ENCODE measurements at regions of chr7 and their contacts with region 1.

Region 1: DNA sequence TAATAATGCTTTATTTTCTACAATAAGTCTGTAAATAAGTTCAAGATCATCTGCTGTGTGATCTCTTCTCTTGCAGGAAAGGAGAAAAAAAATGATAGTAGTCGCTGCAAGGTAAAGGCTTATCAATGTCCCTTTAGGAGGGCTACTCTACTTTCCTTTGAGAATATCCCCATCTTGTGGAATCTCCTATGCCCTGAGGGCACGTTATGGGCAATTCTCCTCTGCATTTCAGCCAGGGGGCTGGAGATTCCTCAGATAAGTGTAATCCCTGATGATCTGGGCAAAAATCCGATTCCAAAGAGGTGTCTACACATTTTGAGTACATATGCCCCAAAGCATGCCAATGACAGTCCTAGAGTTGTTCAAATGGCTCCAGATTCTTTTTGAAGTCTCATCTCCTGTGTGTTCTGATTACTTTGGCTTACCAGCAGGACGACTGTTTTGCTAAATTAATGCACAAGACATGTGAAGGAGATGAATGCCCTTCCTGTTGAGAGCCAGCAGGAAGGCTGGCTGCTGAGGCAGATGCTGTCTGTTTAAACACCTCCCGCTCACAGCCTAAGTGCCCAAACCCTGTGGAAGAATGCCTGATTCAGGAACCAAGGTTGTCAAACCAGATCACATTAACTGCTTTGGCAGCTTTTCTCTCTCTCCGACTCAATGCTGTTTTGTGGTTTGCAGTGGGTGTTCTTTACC is 171.2 kb upstream of the COL1A2 start:
- DNase-seq: peak; percentile 63
- ATAC-seq: peak; percentile 74
- H3K4me3 ChIP-seq: no peak overlapping the region
- H3K27ac ChIP-seq: no peak overlapping the region
- H3K4me1 ChIP-seq: no peaks in the 10 kb centered on the region
- H3K27me3 ChIP-seq: no peaks in the 10 kb centered on the region
- CTCF ChIP-seq: peak; percentile 52

Region 2: DNA sequence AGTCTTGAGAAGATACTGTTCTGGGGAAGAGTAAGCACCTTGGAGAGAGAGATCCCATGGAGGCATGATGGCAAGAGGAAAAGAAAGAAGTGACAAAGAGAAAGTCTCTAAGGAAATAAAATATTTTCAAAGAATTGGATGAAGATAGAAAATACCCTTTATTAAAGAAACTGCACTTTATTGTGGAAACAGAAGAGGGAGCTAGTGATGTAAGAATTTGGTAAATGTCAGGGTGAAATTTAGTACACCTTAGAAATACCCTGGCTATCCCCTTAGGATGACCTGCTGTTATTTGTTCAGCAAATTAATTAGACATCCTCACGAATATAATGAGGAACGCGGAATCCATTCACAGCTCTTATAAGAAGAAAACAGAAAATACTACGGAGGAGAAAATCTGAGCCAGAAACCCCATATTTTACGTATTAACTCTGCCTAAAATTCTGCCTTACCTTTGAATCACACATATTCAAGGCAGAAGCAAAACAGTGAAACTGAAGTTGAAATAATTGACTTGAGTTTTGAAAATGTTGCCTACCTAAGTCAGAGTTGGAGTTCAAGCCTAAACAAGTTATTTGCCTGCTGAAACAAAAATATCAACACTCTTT is 423.7 kb before region 1 on chr7:
- CTCF ChIA-PET with region 1: interaction called, 4 read pairs
- POLR2A ChIA-PET with region 1: no interaction called
- intact Hi-C with region 1: loop called (anchors 1 kb)
- DNase-seq: peak; percentile 51
- ATAC-seq: peak; percentile 38; the same call in 1 of the 2 replicates
- H3K4me3 ChIP-seq: no peak overlapping the region
- H3K27ac ChIP-seq: no peak overlapping the region
- H3K4me1 ChIP-seq: no peaks in the 10 kb centered on the region
- H3K27me3 ChIP-seq: peaks cover 12% of the 10 kb centered on the region; the same call in 1 of the 2 replicates
- CTCF ChIP-seq: peak; percentile 71

Region 3: DNA sequence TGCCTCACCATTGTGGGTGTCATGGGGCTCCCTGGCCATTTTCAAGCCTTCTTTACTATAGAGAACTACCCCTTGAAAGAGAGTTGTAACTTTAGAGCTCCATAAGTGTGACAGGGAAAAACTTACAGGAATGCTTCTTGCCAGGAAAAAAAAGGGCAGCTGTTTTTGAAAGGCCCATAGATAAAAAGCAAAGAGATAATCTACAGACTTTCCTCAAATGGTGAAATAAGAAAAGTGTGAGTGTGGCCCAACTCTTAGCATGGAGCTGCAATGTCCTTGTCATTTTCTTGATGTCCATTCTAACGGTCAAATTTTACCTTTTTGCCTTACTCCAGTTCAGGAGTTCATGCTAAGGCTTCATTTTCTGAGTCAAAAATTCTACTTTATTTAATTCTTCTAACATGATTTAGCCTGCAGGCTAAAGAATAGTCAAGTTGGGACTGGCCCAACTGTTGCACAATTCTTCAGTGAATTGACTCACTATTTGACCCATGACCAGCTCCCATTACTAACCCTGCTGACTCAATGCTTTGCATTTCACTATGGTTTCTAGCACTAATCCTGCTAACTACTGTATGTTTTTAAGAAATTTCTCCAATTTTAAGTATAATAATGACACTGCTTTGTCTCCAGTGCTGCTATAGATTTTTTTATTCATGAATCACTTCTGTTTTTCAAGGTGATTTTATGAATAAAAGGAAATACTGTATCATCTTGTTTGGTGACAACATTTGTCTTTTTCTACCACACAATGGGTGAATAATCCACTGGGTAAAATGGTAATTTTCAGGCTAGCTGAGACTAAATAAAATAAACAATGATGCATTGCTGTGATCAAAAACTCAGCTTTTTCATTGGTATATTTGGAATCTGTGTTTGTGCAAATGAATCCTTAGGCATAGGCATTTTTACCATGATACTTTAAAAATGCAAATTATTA is 473.8 kb after region 1 on chr7:
- CTCF ChIA-PET with region 1: no interaction called
- POLR2A ChIA-PET with region 1: no interaction called
- intact Hi-C with region 1: no loop called
- DNase-seq: peak; percentile 96
- ATAC-seq: peak; percentile 66
- H3K4me3 ChIP-seq: peak overlapping the region; percentile 51
- H3K27ac ChIP-seq: peak overlapping the region; percentile 85
- H3K4me1 ChIP-seq: peaks cover 40% of the 10 kb centered on the region
- H3K27me3 ChIP-seq: no peaks in the 10 kb centered on the region
- CTCF ChIP-seq: no peak

Measured in PC-3 (cell line).